ENCODE measurements at regions of chr1 and their contacts with region 1.

Region 1: GRCh38 chr1:223276029-223276428 is 87.9 kb downstream of the SUSD4 start:
- DNase-seq: no peak
- ATAC-seq: no peak
- H3K4me3 ChIP-seq: no peak overlapping the region
- H3K27ac ChIP-seq: no peak overlapping the region
- H3K4me1 ChIP-seq: no peaks in the 10 kb centered on the region
- H3K27me3 ChIP-seq: peaks cover 3% of the 10 kb centered on the region; the same call in 1 of the 2 replicates
- CTCF ChIP-seq: no peak
- POLR2A ChIP-seq: no peak
- RAD21 ChIP-seq: no peak

Region 2: DNA sequence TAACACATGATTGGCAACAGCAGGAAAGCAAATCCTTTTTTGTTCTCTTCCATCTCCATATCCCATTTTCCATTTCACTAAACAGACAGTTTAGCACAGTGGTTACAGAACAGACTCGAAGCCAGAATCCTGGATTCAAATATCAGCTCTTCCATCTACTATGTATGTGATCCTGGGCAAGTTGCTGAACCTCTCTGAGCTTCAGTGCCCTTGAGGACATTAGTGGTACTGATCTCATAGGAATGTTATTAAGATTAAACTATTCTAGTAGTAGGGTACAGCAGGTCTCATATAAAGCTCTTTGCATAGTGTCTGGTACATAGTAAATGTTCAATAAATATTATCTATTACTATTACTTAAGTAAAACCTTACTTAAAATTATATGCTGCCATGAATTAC is 714.4 kb before region 1 on chr1:
- CTCF ChIA-PET with region 1: interaction called, 12 read pairs
- POLR2A ChIA-PET with region 1: no interaction called
- dilution Hi-C with region 1: no loop called
- in situ Hi-C with region 1: no loop called
- intact Hi-C with region 1: no loop called
- DNase-seq: no peak
- ATAC-seq: no peak
- H3K4me3 ChIP-seq: no peak overlapping the region
- H3K27ac ChIP-seq: no peak overlapping the region
- H3K4me1 ChIP-seq: no peaks in the 10 kb centered on the region
- H3K27me3 ChIP-seq: no peaks in the 10 kb centered on the region
- CTCF ChIP-seq: no peak
- POLR2A ChIP-seq: no peak
- RAD21 ChIP-seq: no peak

Region 3: GRCh38 chr1:223358826-223359225 is 82.8 kb after region 1 on chr1:
- CTCF ChIA-PET with region 1: no interaction called
- POLR2A ChIA-PET with region 1: no interaction called
- dilution Hi-C with region 1: no loop called
- in situ Hi-C with region 1: no loop called
- intact Hi-C with region 1: no loop called
- DNase-seq: no peak
- ATAC-seq: no peak
- H3K4me3 ChIP-seq: no peak overlapping the region
- H3K27ac ChIP-seq: no peak overlapping the region
- H3K4me1 ChIP-seq: peaks cover 1% of the 10 kb centered on the region; the same call in 1 of the 2 replicates
- H3K27me3 ChIP-seq: peaks cover 49% of the 10 kb centered on the region
- CTCF ChIP-seq: no peak
- POLR2A ChIP-seq: no peak
- RAD21 ChIP-seq: no peak

Region 4: DNA sequence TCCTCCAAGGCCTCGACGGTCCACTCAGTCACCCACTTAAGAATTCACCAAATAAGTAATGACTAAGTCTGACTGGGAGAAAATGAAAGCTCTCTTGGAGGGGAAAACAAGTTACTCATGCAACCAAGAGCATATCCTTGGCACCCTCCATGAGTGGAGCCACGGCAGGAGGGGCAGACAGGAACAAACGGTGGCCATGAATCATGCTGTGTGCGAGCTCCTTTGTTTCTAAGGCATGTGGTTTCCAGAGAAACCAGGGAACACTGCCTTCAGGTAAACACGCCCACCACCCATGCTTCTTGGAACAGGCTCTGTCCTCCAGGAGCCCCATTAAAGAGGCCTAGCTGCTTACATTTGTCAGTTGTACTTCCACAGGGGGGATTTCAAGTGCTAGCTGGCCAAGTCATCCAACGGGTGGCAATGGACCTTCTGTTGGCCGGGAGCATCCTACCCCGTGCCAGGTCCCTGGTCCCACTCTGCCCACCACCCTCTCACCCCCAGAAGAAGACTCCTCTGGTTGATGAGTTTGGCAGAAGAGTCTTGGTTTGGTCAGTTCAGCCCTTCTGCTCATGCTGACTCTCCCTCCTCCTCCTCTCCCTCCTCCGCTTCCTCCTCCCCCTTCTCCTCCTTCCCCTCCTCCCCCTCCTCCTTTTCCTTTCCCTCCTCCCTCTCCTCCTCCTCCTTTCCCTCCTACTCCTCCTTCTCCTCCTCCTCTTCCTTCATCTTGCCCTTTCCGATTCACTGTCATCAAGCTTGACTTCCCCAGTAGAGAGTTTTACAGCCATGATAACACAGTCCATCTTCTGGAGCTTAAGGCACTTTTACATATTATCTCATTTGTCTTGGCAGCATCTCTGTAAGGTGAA is 224.8 kb after region 1 on chr1:
- CTCF ChIA-PET with region 1: no interaction called
- POLR2A ChIA-PET with region 1: no interaction called
- dilution Hi-C with region 1: no loop called
- in situ Hi-C with region 1: no loop called
- intact Hi-C with region 1: no loop called
- DNase-seq: peak; percentile 95
- ATAC-seq: peak; percentile 81
- H3K4me3 ChIP-seq: no peak overlapping the region
- H3K27ac ChIP-seq: no peak overlapping the region; the same call in 1 of the 2 replicates
- H3K4me1 ChIP-seq: peaks cover 2% of the 10 kb centered on the region; the same call in 1 of the 2 replicates
- H3K27me3 ChIP-seq: no peaks in the 10 kb centered on the region
- CTCF ChIP-seq: no peak
- POLR2A ChIP-seq: no peak
- RAD21 ChIP-seq: no peak

Measured in IMR-90 (cell line).